ENCODE measurements at regions of chr2 and their contacts with region 1.

Region 1: DNA sequence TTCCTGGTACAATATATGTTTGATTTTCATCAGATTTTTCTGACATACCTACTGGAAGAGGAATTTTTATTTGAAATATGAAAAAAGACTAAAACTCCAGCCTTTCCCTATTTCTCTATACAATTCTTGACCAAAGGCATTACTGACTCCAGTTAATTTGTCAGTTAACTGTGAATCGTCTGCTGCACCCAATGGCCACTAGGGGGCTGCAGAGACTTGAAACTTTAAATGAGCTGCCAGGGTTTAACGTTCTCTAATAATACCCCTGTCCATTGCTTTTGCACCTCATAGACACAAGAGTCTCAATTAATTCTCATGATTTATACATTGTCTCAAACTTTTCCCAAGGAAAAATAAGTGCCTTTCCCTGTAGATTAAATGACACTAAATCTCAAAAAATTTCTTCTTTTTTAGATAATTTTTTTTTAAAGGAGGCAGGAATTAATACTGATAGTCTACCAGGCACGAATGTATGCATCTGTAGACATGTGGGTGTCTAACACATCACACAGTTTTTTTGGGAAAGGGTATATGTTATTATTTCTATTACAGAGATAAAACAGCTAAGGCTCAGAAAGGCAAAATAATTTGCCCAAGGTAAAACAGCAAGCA is 1.8 kb upstream of the ALK start:
- DNase-seq: peak; percentile 70
- ATAC-seq: peak; percentile 38

Region 2: GRCh38 chr2:30072250-30072842 is 149.1 kb after region 1 on chr2:
- intact Hi-C with region 1: loop called (anchors 10 kb)
- DNase-seq: peak; percentile 74
- ATAC-seq: peak; percentile 68